Right ventricle myocardium inferior (tissue), 1 donor: ENCODE measurements at regions of chr1 and their contacts with region 1.

Region 1: DNA sequence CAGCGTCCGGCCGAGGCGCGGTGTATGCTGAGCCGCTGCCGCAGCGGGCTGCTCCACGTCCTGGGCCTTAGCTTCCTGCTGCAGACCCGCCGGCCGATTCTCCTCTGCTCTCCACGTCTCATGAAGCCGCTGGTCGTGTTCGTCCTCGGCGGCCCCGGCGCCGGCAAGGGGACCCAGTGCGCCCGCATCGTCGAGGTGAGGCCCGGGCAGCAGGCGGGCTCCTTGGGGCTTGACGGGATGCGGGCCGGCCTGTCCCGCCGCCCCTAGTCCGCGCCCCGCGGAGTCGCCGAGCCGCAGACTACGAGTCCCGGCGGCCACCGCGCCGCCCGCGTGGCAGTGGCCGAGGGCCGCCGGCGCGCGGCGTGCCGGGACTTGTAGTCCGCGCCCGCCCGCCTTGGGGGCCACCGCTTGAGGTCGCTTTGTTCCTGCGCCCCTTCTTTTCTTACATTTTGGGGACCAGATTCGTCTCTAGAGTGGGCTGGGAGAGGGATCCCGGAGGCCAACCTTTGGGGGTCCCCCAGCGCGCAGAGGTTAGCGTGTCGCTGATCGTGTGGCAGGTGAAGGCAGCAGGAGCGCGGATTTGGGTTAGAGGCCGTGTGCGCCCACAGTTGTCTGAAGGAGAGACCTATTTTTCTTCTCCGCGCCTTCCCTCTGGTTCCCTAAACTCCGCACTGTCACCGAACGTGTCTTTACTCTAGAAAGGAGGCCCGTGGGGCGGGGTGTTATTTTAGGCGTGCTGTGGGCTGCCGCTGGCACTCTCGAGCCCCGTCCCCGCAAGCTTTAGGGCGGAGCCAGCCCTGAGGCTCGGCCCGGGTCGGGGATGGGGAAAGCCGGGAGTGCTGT is 553 bp downstream of the CMPK1 start:
- DNase-seq: peak; percentile 93
- ATAC-seq: peak; percentile 95

Region 2: GRCh38 chr1:47201179-47201578 is 133.0 kb before region 1 on chr1:
- intact Hi-C with region 1: no loop called
- DNase-seq: no peak
- ATAC-seq: no peak

Region 3: DNA sequence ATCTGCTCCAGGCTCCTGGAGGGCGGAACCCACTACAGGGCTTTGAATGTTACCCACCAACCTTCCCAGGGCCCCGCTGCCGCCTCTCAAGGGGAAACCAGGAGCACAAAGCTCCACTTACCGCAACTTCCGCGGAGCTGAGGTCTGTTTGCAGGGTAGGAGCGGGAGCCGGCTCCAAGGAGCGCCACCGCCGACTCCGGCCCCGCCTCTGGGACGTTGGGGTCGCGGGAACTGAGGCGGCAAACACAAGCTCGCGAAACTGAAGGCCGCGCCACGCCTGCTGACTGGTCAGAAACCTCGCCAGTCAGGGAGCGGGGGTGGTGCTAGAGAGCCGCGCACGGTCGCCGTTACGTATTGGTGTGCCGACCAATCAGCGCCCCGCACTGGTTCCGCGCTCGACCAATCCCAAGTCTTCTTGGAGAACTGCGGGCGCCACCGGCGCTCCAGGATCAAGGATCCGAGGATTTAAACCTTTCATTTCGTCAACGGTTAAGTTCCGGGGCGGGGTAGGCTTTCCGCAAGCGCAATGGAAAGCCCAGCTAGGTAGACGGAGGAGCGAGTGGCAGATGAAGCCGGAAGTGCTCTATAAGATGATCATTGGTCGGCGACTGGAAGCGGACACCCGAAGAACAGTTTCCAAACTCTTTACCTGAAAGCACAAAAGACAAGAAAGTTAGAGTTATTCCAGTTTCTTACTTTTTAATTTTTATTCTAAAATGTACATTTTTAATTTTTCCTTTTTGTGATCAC is 20.1 kb before region 1 on chr1 and contains the start of gene STIL:
- intact Hi-C with region 1: loop called (anchors 2 kb)
- DNase-seq: peak; percentile 100
- ATAC-seq: peak; percentile 100
- total RNA-seq, gene STIL: 0.73 TPM